CD4-positive, alpha-beta T cell (primary cell): ENCODE measurements at regions of chr4 and their contacts with region 1.

Region 1: GRCh38 chr4:117068120-117068519 is 17.3 kb downstream of the TRAM1L1 start:
- DNase-seq: no peak
- ATAC-seq: no peak
- H3K4me3 ChIP-seq: no peak overlapping the region
- H3K4me3 Mint-ChIP-seq: no peak overlapping the region
- H3K27ac ChIP-seq: no peak overlapping the region
- H3K27ac Mint-ChIP-seq: no peak overlapping the region
- H3K4me1 ChIP-seq: no peaks in the 10 kb centered on the region
- H3K4me1 Mint-ChIP-seq: no peaks in the 10 kb centered on the region
- H3K27me3 ChIP-seq: no peaks in the 10 kb centered on the region
- H3K27me3 Mint-ChIP-seq: no peaks in the 10 kb centered on the region
- CTCF ChIP-seq: no peak

Region 2: GRCh38 chr4:116143198-116143597 is 924.9 kb before region 1 on chr4:
- CTCF ChIA-PET with region 1: no interaction called
- POLR2A ChIA-PET with region 1: no interaction called
- intact Hi-C with region 1: no loop called
- DNase-seq: no peak
- ATAC-seq: no peak
- H3K4me3 ChIP-seq: no peak overlapping the region
- H3K4me3 Mint-ChIP-seq: no peak overlapping the region
- H3K27ac ChIP-seq: no peak overlapping the region
- H3K27ac Mint-ChIP-seq: no peak overlapping the region
- H3K4me1 ChIP-seq: no peaks in the 10 kb centered on the region
- H3K4me1 Mint-ChIP-seq: no peaks in the 10 kb centered on the region
- H3K27me3 ChIP-seq: no peaks in the 10 kb centered on the region
- H3K27me3 Mint-ChIP-seq: no peaks in the 10 kb centered on the region
- CTCF ChIP-seq: no peak

Region 3: DNA sequence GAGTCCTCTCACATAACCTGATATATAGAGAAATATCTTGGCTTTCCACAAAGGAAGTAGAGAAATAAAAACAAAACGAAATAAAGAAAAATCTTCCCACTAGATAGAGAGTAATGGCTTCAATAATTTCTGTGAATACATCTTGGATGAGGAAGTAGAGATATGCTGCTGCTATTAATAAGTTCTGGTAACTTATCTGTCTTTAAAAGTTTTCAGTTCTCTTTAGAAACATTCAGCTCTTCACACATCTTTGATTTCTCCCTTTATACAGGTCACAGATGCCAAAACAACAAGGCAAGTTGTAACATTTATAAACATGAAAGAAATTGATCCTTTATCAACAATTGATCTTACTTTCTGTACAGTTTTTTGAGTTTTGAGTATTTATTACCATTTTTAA is 598.5 kb before region 1 on chr4:
- CTCF ChIA-PET with region 1: no interaction called
- POLR2A ChIA-PET with region 1: no interaction called
- intact Hi-C with region 1: no loop called
- DNase-seq: no peak
- ATAC-seq: no peak
- H3K4me3 ChIP-seq: no peak overlapping the region
- H3K4me3 Mint-ChIP-seq: no peak overlapping the region
- H3K27ac ChIP-seq: no peak overlapping the region
- H3K27ac Mint-ChIP-seq: no peak overlapping the region
- H3K4me1 ChIP-seq: no peaks in the 10 kb centered on the region
- H3K4me1 Mint-ChIP-seq: no peaks in the 10 kb centered on the region
- H3K27me3 ChIP-seq: no peaks in the 10 kb centered on the region
- H3K27me3 Mint-ChIP-seq: no peaks in the 10 kb centered on the region
- CTCF ChIP-seq: no peak

Region 4: GRCh38 chr4:117042962-117043361 is 25.2 kb before region 1 on chr4:
- CTCF ChIA-PET with region 1: no interaction called
- POLR2A ChIA-PET with region 1: no interaction called
- intact Hi-C with region 1: loop called in 1 of 2 experiments (anchors 1 kb)
- DNase-seq: no peak
- ATAC-seq: no peak
- H3K4me3 ChIP-seq: no peak overlapping the region
- H3K4me3 Mint-ChIP-seq: no peak overlapping the region
- H3K27ac ChIP-seq: no peak overlapping the region
- H3K27ac Mint-ChIP-seq: no peak overlapping the region
- H3K4me1 ChIP-seq: no peaks in the 10 kb centered on the region
- H3K4me1 Mint-ChIP-seq: no peaks in the 10 kb centered on the region
- H3K27me3 ChIP-seq: no peaks in the 10 kb centered on the region
- H3K27me3 Mint-ChIP-seq: no peaks in the 10 kb centered on the region
- CTCF ChIP-seq: no peak